ENCODE measurements at regions of chr17 and their contacts with region 1.

Region 1: GRCh38 chr17:75109407-75110233 is at the start of gene ARMC7:
- DNase-seq: peak; percentile 92 to 95
- H3K4me3 ChIP-seq: peak within 1 kb of the TSS; percentile 66
- H3K4me3 Mint-ChIP-seq: peak within 1 kb of the TSS; percentile 86
- H3K27ac Mint-ChIP-seq: no peak within 1 kb of the TSS
- H3K4me1 ChIP-seq: peaks cover 8% of the 10 kb centered on the region
- H3K4me1 Mint-ChIP-seq: peaks cover 19% of the 10 kb centered on the region
- H3K27me3 ChIP-seq: no peaks in the 10 kb centered on the region
- H3K27me3 Mint-ChIP-seq: no peaks in the 10 kb centered on the region
- CTCF ChIP-seq: no peak
- total RNA-seq, gene ARMC7: 23.6 and 26.0 TPM in 2 replicates

Region 2: DNA sequence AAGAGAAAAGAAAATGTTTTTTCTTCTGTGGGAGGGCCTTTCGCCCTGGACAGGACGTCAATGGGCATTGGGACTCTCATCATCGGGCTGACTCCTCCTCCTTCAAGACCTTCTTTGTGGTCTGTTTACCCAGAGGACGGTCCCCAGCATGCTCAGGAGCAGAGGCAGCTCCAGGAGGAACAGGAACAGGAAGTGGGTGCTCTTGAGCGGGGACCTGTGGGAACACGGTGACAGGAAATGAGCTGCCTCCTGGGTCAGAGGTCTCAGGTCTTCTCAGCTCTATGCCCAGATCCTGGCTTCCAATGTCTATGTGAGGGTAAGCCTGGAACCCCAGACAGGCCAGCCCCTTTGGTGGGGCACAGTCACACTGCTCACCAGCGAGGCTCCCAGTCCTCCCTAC is 529.7 kb before region 1 on chr17:
- CTCF ChIA-PET with region 1: no interaction called
- POLR2A ChIA-PET with region 1: no interaction called
- intact Hi-C with region 1: no loop called
- DNase-seq: no peak
- H3K4me3 ChIP-seq: no peak overlapping the region
- H3K4me3 Mint-ChIP-seq: no peak overlapping the region
- H3K27ac Mint-ChIP-seq: no peak overlapping the region
- H3K4me1 ChIP-seq: no peaks in the 10 kb centered on the region
- H3K4me1 Mint-ChIP-seq: no peaks in the 10 kb centered on the region
- H3K27me3 ChIP-seq: no peaks in the 10 kb centered on the region
- H3K27me3 Mint-ChIP-seq: peaks cover 8% of the 10 kb centered on the region
- CTCF ChIP-seq: no peak

Region 3: GRCh38 chr17:75059369-75060345 is 50.0 kb before region 1 on chr17:
- CTCF ChIA-PET with region 1: interaction called, 31 read pairs
- POLR2A ChIA-PET with region 1: interaction called, 3 read pairs
- intact Hi-C with region 1: no loop called
- DNase-seq: peak in 1 of 2 experiments; percentile 49
- H3K4me3 ChIP-seq: no peak overlapping the region
- H3K4me3 Mint-ChIP-seq: no peak overlapping the region
- H3K27ac Mint-ChIP-seq: no peak overlapping the region
- H3K4me1 ChIP-seq: peaks cover 13% of the 10 kb centered on the region; the same call in 1 of the 2 replicates
- H3K4me1 Mint-ChIP-seq: peaks cover 9% of the 10 kb centered on the region
- H3K27me3 ChIP-seq: no peaks in the 10 kb centered on the region
- H3K27me3 Mint-ChIP-seq: no peaks in the 10 kb centered on the region
- CTCF ChIP-seq: peak; percentile 49 to 53

Region 4: DNA sequence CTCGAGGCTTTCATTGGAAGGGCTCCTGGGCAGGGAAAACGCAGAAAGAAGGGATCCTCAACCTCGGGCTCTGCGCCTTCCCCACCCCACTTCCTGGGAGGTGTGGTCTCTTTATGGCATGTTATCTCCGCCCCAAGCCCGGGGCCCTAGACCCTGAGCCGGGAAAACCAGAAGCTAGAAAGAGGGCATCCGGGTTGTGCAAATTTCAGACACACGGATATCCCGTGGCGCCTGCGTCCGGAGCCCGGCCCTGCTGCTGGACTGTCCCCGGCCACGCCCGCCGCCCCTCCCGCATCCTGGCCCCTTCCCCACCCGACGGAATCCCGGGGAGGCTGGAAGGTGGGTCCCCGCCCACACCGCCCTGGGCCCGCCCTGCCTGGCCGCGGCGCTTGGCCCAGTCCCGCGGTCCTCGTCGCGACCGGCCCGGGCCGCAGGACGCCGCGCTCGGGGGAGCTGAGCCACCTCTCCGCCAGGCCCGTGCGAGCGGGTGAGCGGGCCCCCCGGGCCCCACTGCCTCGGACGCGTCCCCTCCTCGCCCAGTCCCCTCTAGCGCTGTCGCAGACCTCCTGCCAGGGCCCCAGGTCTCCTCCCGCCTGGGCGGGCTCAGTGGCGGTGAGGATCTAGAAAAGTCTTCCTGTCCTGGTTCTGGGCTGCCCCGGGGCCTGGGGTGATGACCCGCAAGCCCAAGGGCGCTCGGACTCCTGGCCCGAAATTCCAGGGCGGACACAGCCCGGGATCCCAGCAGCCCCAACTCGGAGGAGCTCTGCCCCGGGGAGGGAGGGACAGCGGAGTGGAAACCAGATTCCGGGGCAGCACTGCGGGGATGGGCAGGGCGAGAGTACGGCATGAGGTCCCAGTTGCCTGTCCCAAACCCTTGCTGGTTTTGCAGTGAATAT is 21.8 kb before region 1 on chr17 and contains the start of gene SLC16A5:
- CTCF ChIA-PET with region 1: interaction called, 10 read pairs
- POLR2A ChIA-PET with region 1: interaction called, 13 read pairs
- intact Hi-C with region 1: loop called (anchors 2 kb)
- DNase-seq: peak; percentile 99
- H3K4me3 ChIP-seq: peak within 1 kb of the TSS; percentile 74
- H3K4me3 Mint-ChIP-seq: peak within 1 kb of the TSS; percentile 92
- H3K27ac Mint-ChIP-seq: peak within 1 kb of the TSS; percentile 92
- H3K4me1 ChIP-seq: peaks cover 54% of the 10 kb centered on the region
- H3K4me1 Mint-ChIP-seq: peaks cover 57% of the 10 kb centered on the region
- H3K27me3 ChIP-seq: no peaks in the 10 kb centered on the region
- H3K27me3 Mint-ChIP-seq: no peaks in the 10 kb centered on the region
- CTCF ChIP-seq: no peak
- total RNA-seq, gene SLC16A5: 27.7 and 33.8 TPM in 2 replicates

Region 5: GRCh38 chr17:75131280-75132017 is 21.8 kb after region 1 on chr17 and contains the start of gene NT5C:
- CTCF ChIA-PET with region 1: interaction called, 30 read pairs
- POLR2A ChIA-PET with region 1: interaction called, 3 read pairs
- intact Hi-C with region 1: loop called (anchors 1 kb)
- DNase-seq: peak; percentile 86 to 92
- H3K4me3 ChIP-seq: peak within 1 kb of the TSS; percentile 85
- H3K4me3 Mint-ChIP-seq: peak within 1 kb of the TSS; percentile 93
- H3K27ac Mint-ChIP-seq: peak within 1 kb of the TSS; percentile 91
- H3K4me1 ChIP-seq: peaks cover 19% of the 10 kb centered on the region
- H3K4me1 Mint-ChIP-seq: peaks cover 8% of the 10 kb centered on the region
- H3K27me3 ChIP-seq: no peaks in the 10 kb centered on the region
- H3K27me3 Mint-ChIP-seq: no peaks in the 10 kb centered on the region
- CTCF ChIP-seq: peak; percentile 68 to 86
- total RNA-seq, gene NT5C: 59.3 and 68.4 TPM in 2 replicates

Region 6: GRCh38 chr17:75199886-75200618 is 90.4 kb after region 1 on chr17:
- CTCF ChIA-PET with region 1: interaction called, 58 read pairs
- POLR2A ChIA-PET with region 1: interaction called, 4 read pairs
- intact Hi-C with region 1: loop called (anchors 1 kb)
- DNase-seq: no peak
- H3K4me3 ChIP-seq: no peak overlapping the region
- H3K4me3 Mint-ChIP-seq: no peak overlapping the region
- H3K27ac Mint-ChIP-seq: no peak overlapping the region
- H3K4me1 ChIP-seq: no peaks in the 10 kb centered on the region
- H3K4me1 Mint-ChIP-seq: peaks cover under 1% of the 10 kb centered on the region
- H3K27me3 ChIP-seq: no peaks in the 10 kb centered on the region
- H3K27me3 Mint-ChIP-seq: no peaks in the 10 kb centered on the region
- CTCF ChIP-seq: no peak

Region 7: GRCh38 chr17:75238684-75239191 is 129.1 kb after region 1 on chr17:
- CTCF ChIA-PET with region 1: interaction called, 6 read pairs
- POLR2A ChIA-PET with region 1: no interaction called
- intact Hi-C with region 1: loop called (anchors 1 kb)
- DNase-seq: peak; percentile 72 to 74
- H3K4me3 ChIP-seq: no peak overlapping the region
- H3K4me3 Mint-ChIP-seq: no peak overlapping the region
- H3K27ac Mint-ChIP-seq: peak overlapping the region; percentile 81
- H3K4me1 ChIP-seq: peaks cover 16% of the 10 kb centered on the region
- H3K4me1 Mint-ChIP-seq: peaks cover 19% of the 10 kb centered on the region
- H3K27me3 ChIP-seq: no peaks in the 10 kb centered on the region
- H3K27me3 Mint-ChIP-seq: no peaks in the 10 kb centered on the region
- CTCF ChIP-seq: peak; percentile 84 to 90